HCT116 (cell line): ENCODE measurements at regions of chrX and their contacts with region 1.

Region 1: DNA sequence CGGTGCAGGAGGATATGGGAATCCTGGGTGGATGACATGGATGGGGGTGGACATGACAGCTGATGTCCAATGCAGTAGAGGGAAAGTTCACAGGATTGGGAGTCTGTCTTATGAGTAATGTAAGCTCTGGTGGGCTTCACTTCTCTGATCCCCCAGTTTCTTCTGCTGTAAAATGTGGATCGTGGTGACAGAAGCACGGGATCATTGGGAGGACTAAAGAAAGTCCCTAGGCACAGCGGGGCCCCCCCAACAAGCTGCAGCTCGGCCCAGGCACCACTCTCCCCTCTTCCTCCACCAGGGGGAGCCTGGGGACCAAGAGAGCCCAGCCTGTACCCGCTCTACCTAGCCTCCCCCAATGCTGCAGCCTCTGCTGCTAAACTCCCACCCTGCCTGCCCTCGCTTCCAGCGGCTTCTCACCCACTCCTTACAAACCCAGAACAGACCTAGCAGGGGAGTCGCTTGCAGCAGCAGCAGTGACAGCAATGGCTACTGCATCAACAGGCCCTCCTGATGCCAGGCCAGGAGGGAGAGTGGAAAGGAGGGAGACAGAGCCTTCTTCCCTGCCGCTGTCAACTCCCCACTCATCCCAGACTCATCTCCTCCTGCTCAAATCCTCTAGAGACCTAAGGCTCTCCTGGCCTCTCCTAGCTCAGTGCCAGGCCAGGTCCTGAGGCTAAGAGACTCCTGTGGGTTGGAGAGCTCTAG is 36.1 kb upstream of the IQSEC2 start:
- DNase-seq: no peak
- ATAC-seq: peak; percentile 77
- H3K4me3 ChIP-seq: no peak overlapping the region
- H3K27ac ChIP-seq: no peak overlapping the region
- H3K4me1 ChIP-seq: peaks cover 4 to 5% of the 10 kb centered on the region in 2 experiments; a peak in 2 of 4 replicates
- H3K27me3 ChIP-seq: 0 out of 2 replicates have a peak, but pooled peaks cover 5% of the 10 kb centered on the region
- CTCF ChIP-seq: peak; percentile 52 to 67 (median 67); a peak in 5 of 6 replicates
- POLR2A ChIP-seq: no peak
- RAD21 ChIP-seq: peak; percentile 73

Region 2: GRCh38 chrX:53284684-53285447 is 32.7 kb before region 1 on chrX:
- CTCF ChIA-PET with region 1: interaction called, 11 read pairs
- POLR2A ChIA-PET with region 1: no interaction called
- RAD21 ChIA-PET with region 1: no interaction called
- intact Hi-C with region 1: no loop called
- DNase-seq: no peak
- ATAC-seq: peak; percentile 59
- H3K4me3 ChIP-seq: no peak overlapping the region
- H3K27ac ChIP-seq: no peak overlapping the region
- H3K4me1 ChIP-seq: peaks cover 36 to 50% of the 10 kb centered on the region in 2 experiments
- H3K27me3 ChIP-seq: no peaks in the 10 kb centered on the region
- CTCF ChIP-seq: peak in 2 of 3 experiments; percentile 73 to 79; a peak in 4 of 6 replicates
- POLR2A ChIP-seq: no peak
- RAD21 ChIP-seq: no peak

Region 3: GRCh38 chrX:53445977-53446376 is 128.5 kb after region 1 on chrX:
- CTCF ChIA-PET with region 1: interaction called, 25 read pairs
- POLR2A ChIA-PET with region 1: no interaction called
- RAD21 ChIA-PET with region 1: interaction called, 3 to 7 read pairs
- intact Hi-C with region 1: loop called (anchors 1 kb)
- DNase-seq: no peak
- ATAC-seq: peak; percentile 55
- H3K4me3 ChIP-seq: no peak overlapping the region
- H3K27ac ChIP-seq: no peak overlapping the region
- H3K4me1 ChIP-seq: peaks cover 3 to 8% of the 10 kb centered on the region in 2 experiments; a peak in 2 of 4 replicates
- H3K27me3 ChIP-seq: no peaks in the 10 kb centered on the region
- CTCF ChIP-seq: peak in 2 of 3 experiments; percentile 66 to 76; a peak in 4 of 6 replicates
- POLR2A ChIP-seq: no peak
- RAD21 ChIP-seq: no peak

Region 4: DNA sequence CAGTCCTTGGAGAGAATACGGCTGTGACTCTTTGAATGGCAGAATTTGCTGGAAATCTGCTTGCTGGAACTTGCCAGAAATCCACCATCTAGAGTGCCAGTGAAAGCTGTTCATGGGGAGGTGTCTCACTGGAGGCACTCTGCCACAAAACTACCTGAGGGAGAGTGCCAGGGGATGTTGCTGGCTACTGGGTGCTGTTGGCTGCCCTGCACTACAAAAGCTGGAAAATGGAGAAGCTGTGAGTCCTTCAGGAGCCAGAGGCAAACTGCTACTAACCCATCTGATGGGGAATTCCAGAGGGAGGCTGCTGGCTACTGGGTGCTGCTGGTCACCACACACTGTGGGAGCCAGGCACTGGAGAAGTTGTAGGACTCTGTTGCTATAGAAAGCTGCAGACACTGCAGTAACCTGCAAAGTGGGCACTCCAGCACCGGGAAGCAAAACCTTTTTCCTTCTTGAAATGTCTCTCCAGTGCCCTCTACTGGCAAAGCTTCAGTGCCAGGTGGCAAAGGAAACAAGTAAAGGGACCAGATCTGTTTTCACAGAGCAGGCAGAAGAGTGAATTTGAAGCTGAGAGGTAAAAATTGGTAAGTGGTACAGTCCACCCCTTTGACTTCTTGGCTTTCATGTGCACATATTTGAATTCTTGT is 164.4 kb after region 1 on chrX:
- CTCF ChIA-PET with region 1: interaction called, 16 read pairs
- POLR2A ChIA-PET with region 1: no interaction called
- RAD21 ChIA-PET with region 1: interaction called in 1 of 2 experiments, 4 read pairs
- intact Hi-C with region 1: loop called (anchors 1 kb)
- DNase-seq: peak; percentile 45
- ATAC-seq: peak; percentile 81
- H3K4me3 ChIP-seq: no peak overlapping the region
- H3K27ac ChIP-seq: no peak overlapping the region
- H3K4me1 ChIP-seq: peaks cover 0 to 8% of the 10 kb centered on the region in 2 experiments; a peak in 1 of 4 replicates
- H3K27me3 ChIP-seq: no peaks in the 10 kb centered on the region
- CTCF ChIP-seq: peak; percentile 51 to 72 (median 60); a peak in 5 of 6 replicates
- POLR2A ChIP-seq: no peak
- RAD21 ChIP-seq: peak; percentile 55; the same call in 1 of the 2 replicates

Region 5: GRCh38 chrX:53511322-53511721 is 193.8 kb after region 1 on chrX:
- CTCF ChIA-PET with region 1: no interaction called
- POLR2A ChIA-PET with region 1: no interaction called
- RAD21 ChIA-PET with region 1: no interaction called
- intact Hi-C with region 1: no loop called
- DNase-seq: no peak
- ATAC-seq: no peak
- H3K4me3 ChIP-seq: no peak overlapping the region
- H3K27ac ChIP-seq: no peak overlapping the region
- H3K4me1 ChIP-seq: no peaks in the 10 kb centered on the region
- H3K27me3 ChIP-seq: no peaks in the 10 kb centered on the region
- CTCF ChIP-seq: no peak
- POLR2A ChIP-seq: no peak
- RAD21 ChIP-seq: no peak